T-cell (primary cell): ENCODE measurements at regions of chr3 and their contacts with region 1.

Region 1: GRCh38 chr3:57755668-57756527 is at the start of gene SLMAP:
- DNase-seq: peak; percentile 90 to 100 (median 96)
- ATAC-seq: peak; percentile 93 to 95 (median 94)
- H3K4me3 ChIP-seq: peak within 1 kb of the TSS; percentile 87 to 94
- H3K4me3 Mint-ChIP-seq: peak within 1 kb of the TSS; percentile 94 to 98 (median 95)
- H3K27ac ChIP-seq: peak within 1 kb of the TSS; percentile 75
- H3K27ac Mint-ChIP-seq: peak within 1 kb of the TSS; percentile 88 to 93
- H3K4me1 ChIP-seq: peaks cover 18 to 28% of the 10 kb centered on the region in 2 experiments
- H3K4me1 Mint-ChIP-seq: peaks cover 42 to 45% (median 43%) of the 10 kb centered on the region in 3 donors
- H3K27me3 ChIP-seq: peaks cover 0 to 3% of the 10 kb centered on the region in 2 experiments
- H3K27me3 Mint-ChIP-seq: no peaks in the 10 kb centered on the region
- total RNA-seq, gene SLMAP: 57.4 to 78.8 (median 72.3) TPM

Region 2: GRCh38 chr3:57078344-57078634 is 677.6 kb before region 1 on chr3:
- CTCF ChIA-PET with region 1: no interaction called
- POLR2A ChIA-PET with region 1: interaction called in 1 of 2 experiments, 10 read pairs
- DNase-seq: peak in 18 of 35 experiments; percentile 6 to 34 (median 16)
- ATAC-seq: peak; percentile 35 to 64 (median 48)
- H3K4me3 ChIP-seq: peak overlapping the region; percentile 46 to 84
- H3K4me3 Mint-ChIP-seq: peak overlapping the region; percentile 61 to 71 (median 66)
- H3K27ac ChIP-seq: no peak overlapping the region
- H3K27ac Mint-ChIP-seq: no peak overlapping the region
- H3K4me1 ChIP-seq: peaks cover 0 to 17% of the 10 kb centered on the region in 2 experiments
- H3K4me1 Mint-ChIP-seq: peaks cover 9 to 11% (median 10%) of the 10 kb centered on the region in 3 donors
- H3K27me3 ChIP-seq: peaks cover 10 to 55% of the 10 kb centered on the region in 2 experiments
- H3K27me3 Mint-ChIP-seq: peaks cover 59 to 67% of the 10 kb centered on the region in 2 donors

Region 3: GRCh38 chr3:58177747-58178527 is 422.0 kb after region 1 on chr3:
- CTCF ChIA-PET with region 1: no interaction called
- POLR2A ChIA-PET with region 1: no interaction called
- DNase-seq: peak; percentile 61 to 92 (median 83)
- ATAC-seq: peak; percentile 90 to 95 (median 92)
- H3K4me3 ChIP-seq: peak overlapping the region; percentile 48 to 58
- H3K4me3 Mint-ChIP-seq: peak overlapping the region; percentile 66 to 77 (median 69)
- H3K27ac ChIP-seq: no peak overlapping the region
- H3K27ac Mint-ChIP-seq: no peak overlapping the region
- H3K4me1 ChIP-seq: peaks cover 0 to 25% of the 10 kb centered on the region in 2 experiments
- H3K4me1 Mint-ChIP-seq: peaks cover 13 to 15% (median 14%) of the 10 kb centered on the region in 3 donors
- H3K27me3 ChIP-seq: peaks cover 0 to 30% of the 10 kb centered on the region in 2 experiments
- H3K27me3 Mint-ChIP-seq: no peaks in the 10 kb centered on the region